T-cell (primary cell): ENCODE measurements at regions of chr6 and their contacts with region 1.

Region 1: GRCh38 chr6:111591104-111591900 is 14.4 kb downstream of the TRAF3IP2 start:
- DNase-seq: no peak
- ATAC-seq: no peak
- H3K4me3 ChIP-seq: no peak overlapping the region
- H3K4me3 Mint-ChIP-seq: no peak overlapping the region
- H3K27ac ChIP-seq: no peak overlapping the region
- H3K27ac Mint-ChIP-seq: no peak overlapping the region
- H3K4me1 ChIP-seq: peaks cover 6% of the 10 kb centered on the region in 2 experiments
- H3K4me1 Mint-ChIP-seq: peaks cover 34 to 52% (median 36%) of the 10 kb centered on the region in 3 donors
- H3K27me3 ChIP-seq: no peaks in the 10 kb centered on the region
- H3K27me3 Mint-ChIP-seq: no peaks in the 10 kb centered on the region

Region 2: DNA sequence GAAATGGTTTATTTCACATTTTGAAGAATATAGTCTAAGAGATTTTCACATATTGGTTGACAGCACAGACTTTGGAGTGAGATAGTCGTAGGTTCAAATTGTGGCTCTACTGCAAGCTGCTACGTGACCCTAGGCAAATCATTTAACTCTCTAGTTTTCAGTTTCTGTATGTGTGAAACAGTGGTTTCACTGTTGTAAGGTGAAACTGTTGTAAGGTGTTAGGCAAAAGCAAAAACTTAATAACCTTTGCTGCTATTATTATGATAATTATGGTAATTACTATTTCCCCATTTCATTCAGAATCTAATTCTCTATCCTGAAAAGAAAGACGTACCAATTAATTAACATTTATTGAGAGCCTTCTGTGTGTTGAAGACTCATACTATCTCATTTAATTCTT is 252.5 kb before region 1 on chr6:
- CTCF ChIA-PET with region 1: interaction called in 1 of 2 experiments, 10 read pairs
- POLR2A ChIA-PET with region 1: no interaction called
- DNase-seq: no peak
- ATAC-seq: no peak
- H3K4me3 ChIP-seq: no peak overlapping the region
- H3K4me3 Mint-ChIP-seq: no peak overlapping the region
- H3K27ac ChIP-seq: no peak overlapping the region
- H3K27ac Mint-ChIP-seq: no peak overlapping the region
- H3K4me1 ChIP-seq: no peaks in the 10 kb centered on the region
- H3K4me1 Mint-ChIP-seq: no peaks in the 10 kb centered on the region
- H3K27me3 ChIP-seq: no peaks in the 10 kb centered on the region
- H3K27me3 Mint-ChIP-seq: no peaks in the 10 kb centered on the region